Activated CD8-positive, alpha-beta memory T cell treated with anti-CD3 and anti-CD28 coated beads, Interleukin-2, amount 10 ng/mL, durations not matched to agents 7 days and 5 days (primary cell): ENCODE measurements at regions of chr15 and their contacts with region 1.

Region 1: DNA sequence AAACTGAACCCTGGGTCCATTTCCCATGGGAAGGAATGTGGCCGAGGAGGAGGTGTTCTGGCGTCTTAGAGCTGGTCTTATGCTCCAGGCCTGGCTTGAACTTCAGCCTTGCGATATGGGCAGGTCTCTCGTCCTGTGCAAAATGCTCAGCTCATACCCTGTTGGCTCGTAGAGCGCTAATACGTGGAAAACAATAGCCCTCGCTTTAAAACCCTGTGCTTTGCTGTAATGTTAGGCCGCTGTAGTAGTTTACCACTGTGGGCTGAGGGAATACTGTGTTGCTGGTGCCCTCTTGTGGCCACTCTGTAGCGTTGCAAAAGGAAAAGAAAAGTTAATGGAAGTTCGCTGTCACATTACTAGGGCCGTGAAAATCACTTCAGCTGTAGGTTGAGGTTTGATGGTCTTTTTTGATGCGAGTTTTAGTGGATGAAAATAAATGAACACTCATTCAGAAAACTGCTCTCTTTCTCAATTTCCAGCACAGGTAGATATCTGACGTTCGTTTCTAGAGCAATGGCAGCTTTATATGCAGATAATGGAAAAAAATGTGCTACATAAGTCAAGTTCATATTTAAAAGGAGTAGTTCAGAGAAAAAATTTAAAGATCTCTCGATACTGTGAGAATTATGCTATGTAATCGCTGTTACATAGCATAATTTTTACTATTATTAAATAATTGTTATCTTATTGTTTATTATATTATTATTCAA is 92.9 kb downstream of the MCTP2 start:
- DNase-seq: peak; percentile 79
- ATAC-seq: peak; percentile 83
- H3K4me3 Mint-ChIP-seq: no peak overlapping the region
- H3K27ac Mint-ChIP-seq: peak overlapping the region; percentile 71
- H3K4me1 Mint-ChIP-seq: peaks cover 44% of the 10 kb centered on the region
- H3K27me3 Mint-ChIP-seq: no peaks in the 10 kb centered on the region

Region 2: DNA sequence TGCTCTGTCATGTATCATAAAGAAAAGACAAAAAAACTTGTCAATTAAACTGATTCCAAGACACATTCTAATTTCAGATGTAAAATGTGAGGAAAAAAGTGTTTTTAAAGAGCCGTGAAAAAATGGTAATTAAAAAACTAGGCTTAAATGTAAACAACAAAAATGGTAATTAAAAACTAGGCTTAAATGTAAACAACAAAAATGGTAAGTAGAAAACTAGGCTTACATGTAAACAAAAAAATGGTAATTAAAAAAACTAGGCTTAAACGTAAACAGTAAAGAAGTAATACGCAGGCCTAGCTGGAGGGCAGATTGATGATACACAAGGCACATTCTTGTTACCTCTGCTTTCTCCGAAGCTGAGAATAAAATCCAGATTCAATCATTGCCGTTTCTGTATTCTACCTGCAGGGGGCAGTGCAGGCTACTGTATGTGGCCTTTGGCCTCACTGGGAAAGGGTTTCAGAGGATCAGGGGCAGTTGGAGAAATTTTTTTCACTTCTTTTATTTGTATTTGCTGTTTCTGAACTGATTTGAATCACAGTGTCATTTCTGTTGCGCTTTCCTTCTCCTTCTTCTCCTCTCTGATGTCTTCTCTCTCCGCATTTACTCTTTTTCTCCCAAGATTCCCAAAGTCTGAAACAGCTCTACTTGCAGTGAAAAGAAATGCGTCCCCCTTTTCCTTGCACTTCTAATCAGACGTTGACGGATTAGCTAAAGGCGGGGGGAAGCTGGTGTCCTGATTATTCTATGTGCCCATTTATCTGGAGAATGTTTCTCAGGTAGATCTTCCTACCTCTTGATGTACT is 160.1 kb before region 1 on chr15:
- CTCF ChIA-PET with region 1: interaction called, 199 read pairs
- DNase-seq: peak; percentile 76
- ATAC-seq: peak; percentile 83
- H3K4me3 Mint-ChIP-seq: no peak overlapping the region
- H3K27ac Mint-ChIP-seq: no peak overlapping the region
- H3K4me1 Mint-ChIP-seq: peaks cover 13% of the 10 kb centered on the region
- H3K27me3 Mint-ChIP-seq: peaks cover 21% of the 10 kb centered on the region

Region 3: DNA sequence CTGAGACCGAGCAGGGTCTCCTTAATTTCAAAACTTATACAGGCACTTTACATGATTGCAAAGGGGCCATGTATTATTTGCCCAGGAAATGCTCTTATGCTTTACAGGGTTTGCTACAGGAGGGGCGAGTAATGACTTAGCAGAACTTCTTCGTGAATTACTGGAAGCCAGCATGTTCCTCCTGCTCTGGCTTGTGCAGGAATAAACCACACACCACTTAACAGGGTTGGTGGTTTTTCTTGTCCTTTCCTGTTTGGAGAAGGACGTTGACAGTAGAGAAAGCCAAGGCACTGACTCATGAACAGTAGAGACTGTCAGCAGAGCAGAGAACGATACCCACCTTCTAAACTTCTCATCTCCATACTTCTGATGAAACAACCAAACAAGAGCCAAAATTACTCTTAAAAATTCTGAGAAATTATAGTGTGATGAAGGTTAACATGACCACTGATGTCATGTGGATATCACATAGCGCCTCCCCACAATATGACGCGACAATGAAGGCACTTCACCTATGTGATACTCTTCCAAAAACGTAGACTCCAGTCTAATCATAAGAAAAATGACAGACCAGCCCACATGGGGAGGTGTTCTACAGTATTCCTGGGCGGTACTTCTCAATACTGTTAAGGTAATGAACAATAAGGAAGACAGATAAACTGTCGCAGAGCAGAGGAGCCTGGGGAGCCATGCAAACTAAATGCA is 117.7 kb before region 1 on chr15:
- CTCF ChIA-PET with region 1: interaction called, 10 read pairs
- DNase-seq: peak; percentile 92
- ATAC-seq: peak; percentile 92
- H3K4me3 Mint-ChIP-seq: peak overlapping the region; percentile 66
- H3K27ac Mint-ChIP-seq: peak overlapping the region; percentile 95
- H3K4me1 Mint-ChIP-seq: peaks cover 48% of the 10 kb centered on the region
- H3K27me3 Mint-ChIP-seq: no peaks in the 10 kb centered on the region

Region 4: GRCh38 chr15:94238539-94239118 is 85.6 kb before region 1 on chr15:
- CTCF ChIA-PET with region 1: interaction called, 95 read pairs
- DNase-seq: peak; percentile 52
- ATAC-seq: peak; percentile 63
- H3K4me3 Mint-ChIP-seq: peak overlapping the region; percentile 19
- H3K27ac Mint-ChIP-seq: peak overlapping the region; percentile 75
- H3K4me1 Mint-ChIP-seq: peaks cover 83% of the 10 kb centered on the region
- H3K27me3 Mint-ChIP-seq: no peaks in the 10 kb centered on the region

Region 5: GRCh38 chr15:94306700-94307650 is 17.3 kb before region 1 on chr15:
- CTCF ChIA-PET with region 1: interaction called, 78 read pairs
- DNase-seq: peak; percentile 73
- ATAC-seq: peak; percentile 58
- H3K4me3 Mint-ChIP-seq: peak overlapping the region; percentile 56
- H3K27ac Mint-ChIP-seq: peak overlapping the region; percentile 96
- H3K4me1 Mint-ChIP-seq: peaks cover 81% of the 10 kb centered on the region
- H3K27me3 Mint-ChIP-seq: no peaks in the 10 kb centered on the region

Region 6: DNA sequence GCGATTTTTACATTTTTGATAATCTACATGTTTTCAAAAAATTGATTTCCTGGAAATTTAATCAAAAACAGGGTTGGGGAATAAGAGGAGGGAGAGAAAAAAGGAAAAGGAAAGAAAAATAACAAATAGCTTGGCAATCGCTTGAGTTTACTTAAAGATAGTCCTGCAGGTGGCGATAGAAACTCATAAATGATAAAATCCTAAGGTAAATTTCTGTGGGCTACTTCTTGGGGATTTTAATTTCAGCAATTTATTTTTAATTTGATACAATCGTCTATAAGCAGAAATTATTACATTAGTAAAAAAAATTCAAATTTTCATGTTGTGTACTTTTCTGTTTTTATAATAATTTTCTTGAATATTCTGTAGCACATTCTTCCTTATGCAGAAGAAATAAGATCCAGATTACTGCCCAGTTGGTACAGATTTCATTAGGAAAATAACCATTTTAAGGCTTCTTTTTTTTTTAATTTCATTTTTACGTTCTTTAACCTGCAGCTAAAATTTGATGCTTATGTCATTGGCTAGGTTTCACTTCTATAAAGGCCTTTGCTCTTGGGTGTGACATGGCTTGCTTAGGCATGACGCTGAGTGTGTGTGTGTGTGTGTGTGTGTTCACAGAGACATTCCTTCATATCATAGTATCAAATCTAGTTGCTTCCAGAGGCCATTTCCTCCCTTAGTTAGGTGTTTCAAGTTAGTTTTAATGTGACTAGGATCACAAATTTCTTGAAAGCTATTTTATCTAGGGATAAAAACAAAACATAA is 88.9 kb after region 1 on chr15:
- CTCF ChIA-PET with region 1: no interaction called
- DNase-seq: no peak
- ATAC-seq: no peak
- H3K4me3 Mint-ChIP-seq: no peak overlapping the region
- H3K27ac Mint-ChIP-seq: no peak overlapping the region
- H3K4me1 Mint-ChIP-seq: peaks cover 2% of the 10 kb centered on the region
- H3K27me3 Mint-ChIP-seq: no peaks in the 10 kb centered on the region

Region 7: DNA sequence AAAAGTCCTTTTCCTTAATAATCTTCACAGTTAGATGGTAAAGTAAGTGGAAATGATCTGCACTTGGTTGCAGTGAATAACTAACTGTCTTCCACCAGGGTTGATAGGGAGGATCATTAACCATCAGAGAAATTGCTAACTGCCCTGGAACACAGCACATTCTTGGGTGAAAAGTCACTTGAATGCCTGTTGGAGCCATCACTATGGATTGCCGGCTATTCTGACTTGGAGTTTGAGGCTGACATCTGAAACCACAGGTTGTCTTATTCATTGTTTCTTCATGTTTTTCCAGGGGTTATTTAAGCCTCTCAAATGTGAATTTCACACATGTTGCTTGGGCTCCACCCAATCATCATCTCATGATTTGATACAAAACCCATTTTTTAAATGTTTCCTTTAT is 808.5 kb after region 1 on chr15:
- CTCF ChIA-PET with region 1: no interaction called
- DNase-seq: no peak
- ATAC-seq: no peak
- H3K4me3 Mint-ChIP-seq: no peak overlapping the region
- H3K27ac Mint-ChIP-seq: no peak overlapping the region
- H3K4me1 Mint-ChIP-seq: no peaks in the 10 kb centered on the region
- H3K27me3 Mint-ChIP-seq: no peaks in the 10 kb centered on the region